ENCODE measurements at regions of chr22 and their contacts with region 1.

Region 1: DNA sequence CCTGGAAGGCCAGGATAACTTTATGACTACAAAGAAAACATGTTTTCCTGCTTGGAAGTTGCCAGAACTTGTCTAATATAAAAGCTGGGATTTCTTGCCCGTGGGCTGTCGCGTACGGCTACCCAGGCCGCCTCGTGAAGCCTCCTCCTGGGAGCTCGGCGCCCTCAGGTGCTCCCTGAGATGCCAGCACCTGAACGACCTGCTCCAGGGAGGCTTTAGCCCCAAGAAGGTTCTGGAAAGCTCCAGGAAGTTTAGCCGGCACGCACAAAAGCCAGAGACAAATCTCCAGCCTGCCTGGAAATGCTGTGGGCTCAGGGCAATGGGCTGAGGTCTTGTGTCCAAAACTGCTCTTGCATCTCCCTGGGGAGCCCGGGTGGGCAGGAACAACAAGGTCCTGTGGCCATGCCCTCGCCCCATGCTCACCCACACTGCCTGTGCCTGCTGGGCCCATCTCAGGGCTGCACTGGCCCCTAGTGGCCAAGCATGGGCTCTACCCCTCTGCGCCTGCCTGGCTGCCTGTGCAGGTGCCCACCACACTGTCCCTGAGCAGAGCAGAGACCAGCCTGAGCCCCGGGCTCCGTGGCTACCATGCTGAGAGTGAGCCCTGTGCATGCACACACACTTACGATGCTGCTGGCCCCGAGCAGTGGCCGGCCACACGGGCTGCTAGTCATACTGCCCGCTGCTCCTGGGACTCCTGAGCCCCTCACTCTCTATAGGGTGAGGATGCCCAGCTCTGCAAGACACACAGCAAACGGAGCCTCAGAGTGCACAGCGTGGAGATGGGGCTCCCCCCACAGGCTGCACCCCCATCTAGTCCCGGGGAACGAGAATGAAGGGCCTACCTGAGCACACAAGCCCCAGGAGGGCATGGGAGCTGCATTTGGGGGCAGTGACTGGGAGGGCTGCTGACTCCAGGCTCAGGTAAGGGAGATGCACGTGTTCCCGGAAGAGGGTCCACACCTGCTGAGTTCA is 4.9 kb upstream of the CELSR1 start:
- DNase-seq: no peak

Region 2: DNA sequence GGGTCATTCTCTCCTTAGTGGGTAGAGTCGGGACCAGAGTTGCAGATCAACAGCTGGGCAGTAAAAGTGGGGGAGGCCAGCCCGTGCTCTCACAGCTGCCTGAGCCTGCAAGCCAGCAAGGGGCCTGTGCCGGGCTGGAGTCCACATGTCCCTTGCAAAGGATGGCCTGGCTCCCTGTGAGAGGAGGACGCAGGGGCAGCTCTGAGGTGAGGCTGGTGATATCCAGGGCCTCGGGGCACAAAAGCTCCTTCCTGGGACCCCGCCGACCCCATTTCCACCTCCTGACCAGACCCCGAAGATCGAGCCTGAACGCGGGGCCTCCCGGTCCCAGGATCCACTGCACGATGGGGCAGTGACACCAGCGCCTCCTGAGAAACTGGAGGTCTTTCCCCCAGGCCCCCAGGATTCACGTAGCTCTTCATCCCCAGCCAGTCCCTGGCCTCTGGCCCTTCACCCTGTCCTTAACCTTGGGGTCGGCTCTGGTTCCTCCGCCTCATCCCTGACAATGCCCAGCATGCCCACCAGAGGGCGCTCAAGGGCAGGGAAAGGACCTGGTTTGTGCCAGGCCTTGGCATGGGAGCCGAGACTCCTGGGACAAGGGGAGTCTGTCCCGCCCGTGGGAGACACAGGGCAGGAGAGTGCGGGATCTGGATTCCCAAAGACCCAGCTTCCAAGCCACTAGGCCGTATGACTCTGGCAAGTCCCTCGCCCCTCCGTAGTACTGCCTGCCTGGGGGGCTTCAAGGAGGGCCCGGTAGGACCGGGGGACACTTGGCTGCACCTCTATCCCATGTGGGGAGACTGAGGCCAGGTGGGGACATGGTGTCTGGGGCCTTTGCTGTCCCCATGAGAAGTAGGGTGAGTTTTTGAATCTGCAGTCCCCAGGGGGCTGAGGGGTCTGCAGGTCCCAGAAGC is 547.5 kb before region 1 on chr22:
- intact Hi-C with region 1: loop called (anchors 10 kb)
- DNase-seq: peak; percentile 93

Region 3: DNA sequence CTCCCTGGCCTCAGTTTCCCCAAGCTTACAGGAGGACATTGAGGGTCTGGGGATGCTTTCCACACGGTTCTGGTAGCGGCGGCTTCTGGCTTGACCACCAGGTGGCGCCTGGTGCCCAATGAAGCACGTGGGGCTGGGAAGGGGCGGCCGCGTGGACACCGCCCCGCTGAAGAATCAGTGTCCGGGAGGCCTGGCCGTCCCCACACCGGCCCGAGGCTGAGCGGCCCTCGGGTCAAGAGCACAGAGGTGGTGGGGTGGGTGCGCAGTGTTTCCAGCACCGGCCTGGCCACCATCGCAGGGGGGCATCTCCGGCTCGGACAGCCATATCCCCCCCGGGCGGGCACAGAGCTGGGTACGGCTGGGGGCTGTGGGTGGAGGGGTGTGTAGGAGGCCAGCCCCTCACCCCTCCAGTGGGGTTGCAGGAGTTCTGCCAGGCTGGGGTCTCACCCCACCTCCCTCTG is 419.8 kb before region 1 on chr22:
- intact Hi-C with region 1: loop called (anchors 10 kb)
- DNase-seq: peak; percentile 88

Region 4: GRCh38 chr22:46355371-46355995 is 186.8 kb before region 1 on chr22:
- intact Hi-C with region 1: loop called (anchors 1 kb)
- DNase-seq: no peak

Region 5: GRCh38 chr22:46367707-46368191 is 174.5 kb before region 1 on chr22:
- intact Hi-C with region 1: loop called (anchors 2 kb)
- DNase-seq: no peak

Region 6: GRCh38 chr22:46408568-46409506 is 133.5 kb before region 1 on chr22:
- intact Hi-C with region 1: loop called (anchors 5 kb)
- DNase-seq: no peak